Prostate gland (tissue), 2 donors: ENCODE measurements at regions of chr11 and their contacts with region 1.

Region 1: DNA sequence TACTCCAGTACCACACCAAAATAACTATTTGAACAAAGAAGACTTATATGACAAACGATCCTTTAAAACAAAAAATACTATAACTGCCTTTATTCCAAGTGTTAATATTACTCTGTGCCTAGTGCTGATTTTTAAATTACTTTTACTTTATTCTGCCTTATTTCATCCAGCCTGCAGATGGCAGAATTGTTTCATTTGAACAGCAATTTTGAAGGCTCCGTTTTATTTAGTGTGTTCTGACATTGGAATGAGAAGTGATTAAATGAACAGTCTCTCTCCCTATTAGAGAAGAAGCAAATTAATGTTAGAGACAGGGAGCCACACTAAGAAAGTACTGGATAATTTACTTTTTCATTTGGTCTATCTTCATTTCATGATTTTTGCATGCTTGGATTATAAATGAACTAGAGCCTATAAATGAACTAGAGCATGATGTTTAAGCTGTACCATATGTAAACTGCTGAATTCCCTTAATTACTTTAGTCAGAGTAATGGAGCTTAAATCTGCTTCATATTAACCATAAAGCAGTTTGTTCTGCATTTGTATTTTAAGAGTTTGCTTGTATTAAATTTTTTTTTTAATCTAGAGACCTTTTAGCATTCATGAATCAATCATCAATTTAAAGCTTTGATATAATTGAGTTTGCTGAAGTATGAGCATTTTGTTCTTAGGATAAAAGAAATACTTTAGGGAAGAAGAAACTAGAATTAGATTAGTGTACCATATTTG is 9.8 kb downstream of the PDHX start:
- DNase-seq: no peak
- H3K4me3 ChIP-seq: no peak overlapping the region
- H3K27ac ChIP-seq: no peak overlapping the region
- H3K4me1 ChIP-seq: no peaks in the 10 kb centered on the region
- H3K27me3 ChIP-seq: no peaks in the 10 kb centered on the region
- CTCF ChIP-seq: peak in 3 of 4 experiments; percentile 80 to 92 (median 84)
- POLR2A ChIP-seq: no peak

Region 2: GRCh38 chr11:35138943-35139721 is 212.9 kb after region 1 on chr11 and contains the start of gene CD44:
- intact Hi-C with region 1: loop called (anchors 10 kb)
- DNase-seq: peak; percentile 79
- H3K4me3 ChIP-seq: peak within 1 kb of the TSS; percentile 62 to 65
- H3K27ac ChIP-seq: peak within 1 kb of the TSS; percentile 80 to 85
- H3K4me1 ChIP-seq: no peaks in the 10 kb centered on the region
- H3K27me3 ChIP-seq: no peaks in the 10 kb centered on the region
- CTCF ChIP-seq: no peak
- POLR2A ChIP-seq: peak; percentile 78
- total RNA-seq, gene CD44: 166 to 203 TPM

Region 3: DNA sequence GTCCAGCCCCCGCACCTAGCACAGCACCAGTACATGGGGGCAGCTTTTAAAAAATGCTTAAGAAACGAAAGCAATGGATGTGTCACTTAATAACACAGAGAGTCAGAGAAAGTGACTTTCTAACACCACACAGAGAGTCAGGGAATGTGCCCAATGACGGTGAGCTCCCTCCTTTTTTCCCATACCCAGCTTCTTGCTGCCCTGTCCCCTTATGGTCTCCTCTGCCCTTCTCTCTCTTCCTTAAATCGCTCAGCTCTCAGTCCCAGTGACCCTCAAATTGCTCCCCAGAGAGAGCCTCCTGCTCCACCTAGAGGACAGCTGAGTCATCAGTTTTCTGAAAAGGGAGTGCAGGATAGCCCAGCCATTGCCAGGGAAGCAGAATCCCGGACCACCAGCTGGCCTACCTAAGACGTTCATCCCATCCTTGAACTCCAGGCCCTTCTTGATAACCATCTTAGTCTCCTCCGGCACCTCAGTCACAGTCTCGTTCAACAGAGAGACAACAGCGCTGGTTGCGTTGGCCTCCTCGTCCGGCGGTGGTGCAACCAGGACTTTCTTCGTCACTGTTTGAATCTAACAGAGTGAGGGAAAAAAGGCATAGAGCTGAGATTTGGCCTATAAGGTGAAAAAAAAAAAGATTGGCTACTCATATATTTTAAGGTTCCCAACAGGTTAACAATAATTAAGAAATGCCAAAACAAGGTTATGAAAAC is 379.6 kb after region 1 on chr11:
- intact Hi-C with region 1: loop called (anchors 2 kb)
- DNase-seq: peak; percentile 16
- H3K4me3 ChIP-seq: no peak overlapping the region
- H3K27ac ChIP-seq: peak overlapping the region in 1 of 2 donors; percentile 42
- H3K4me1 ChIP-seq: no peaks in the 10 kb centered on the region
- H3K27me3 ChIP-seq: no peaks in the 10 kb centered on the region
- CTCF ChIP-seq: peak in 3 of 4 experiments; percentile 17 to 53 (median 44)
- POLR2A ChIP-seq: no peak

Region 4: DNA sequence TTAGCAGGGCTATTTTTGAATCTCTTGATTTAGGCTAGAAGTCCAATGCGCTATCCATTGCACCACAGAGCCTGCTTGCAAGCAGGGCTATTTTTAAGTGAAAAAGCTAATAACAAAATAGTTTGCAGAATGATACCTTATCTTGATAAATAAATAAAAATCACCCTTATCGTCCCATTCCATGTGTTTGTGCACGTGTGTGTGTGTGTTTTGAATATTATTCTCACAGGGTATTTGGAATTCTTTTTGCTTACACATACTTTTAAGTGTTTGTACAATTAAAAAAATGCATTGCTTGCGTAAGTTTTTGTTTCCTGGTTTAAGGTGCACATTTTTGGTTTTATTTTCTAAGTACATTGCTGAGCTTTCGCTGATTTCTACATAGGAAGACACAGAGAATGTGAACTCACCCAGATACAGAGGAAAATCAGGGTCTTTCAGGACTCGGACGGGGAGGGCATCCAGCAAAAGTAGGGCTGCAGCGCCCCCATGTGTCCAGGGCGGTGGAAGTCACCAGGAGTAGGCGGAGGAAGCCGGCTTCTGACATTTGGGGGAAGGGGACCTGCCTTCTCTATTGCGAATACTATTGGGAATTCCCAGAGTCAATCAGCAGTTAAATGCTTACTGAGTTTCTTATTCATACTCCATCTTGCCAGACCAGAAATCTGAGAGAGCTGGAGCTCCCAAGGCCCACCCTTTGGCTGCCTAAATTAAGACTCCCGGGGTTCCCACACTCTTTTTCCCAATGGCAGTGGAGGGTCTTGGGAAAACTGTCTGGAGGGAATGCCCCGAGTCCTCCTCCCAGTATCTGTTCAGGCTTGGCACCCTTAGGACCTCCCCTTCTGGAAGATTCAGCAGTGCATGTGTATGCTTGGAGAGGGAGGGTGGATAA is 465.9 kb after region 1 on chr11:
- intact Hi-C with region 1: loop called (anchors 2 kb)
- DNase-seq: peak; percentile 68
- H3K4me3 ChIP-seq: no peak overlapping the region
- H3K27ac ChIP-seq: peak overlapping the region; percentile 54 to 84
- H3K4me1 ChIP-seq: no peaks in the 10 kb centered on the region
- H3K27me3 ChIP-seq: no peaks in the 10 kb centered on the region
- CTCF ChIP-seq: peak; percentile 59 to 89 (median 89)
- POLR2A ChIP-seq: no peak

Region 5: DNA sequence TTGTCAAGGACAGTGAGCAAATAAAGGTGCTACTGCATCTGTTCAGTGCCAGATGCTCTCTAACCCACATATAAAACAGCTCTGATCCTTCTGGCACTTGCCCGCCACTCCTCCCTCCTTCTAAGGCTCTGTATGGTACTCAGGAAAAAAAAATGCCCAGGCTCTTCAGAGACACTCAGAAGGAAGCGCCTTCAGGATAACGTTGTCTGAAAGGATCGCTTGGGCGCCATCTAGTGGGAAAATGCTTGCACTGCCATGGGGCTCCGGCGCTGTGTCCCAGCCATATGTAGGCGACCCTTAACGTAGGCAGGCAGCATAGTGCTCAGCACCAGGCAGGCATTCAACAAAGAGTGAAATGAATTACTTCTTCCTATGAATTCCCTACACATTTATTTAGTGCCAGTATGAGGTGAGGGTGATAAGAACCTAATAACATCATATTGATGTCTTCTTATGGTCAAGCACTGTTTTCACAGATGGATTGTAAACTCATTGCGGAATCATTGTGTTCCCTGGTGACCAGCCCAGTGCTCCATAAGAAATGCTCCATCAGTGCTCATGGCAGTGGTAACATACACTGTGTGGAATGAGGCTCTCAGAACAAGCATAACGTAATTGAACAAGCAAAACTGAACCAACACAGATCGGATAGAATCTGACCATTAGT is 559.5 kb after region 1 on chr11:
- intact Hi-C with region 1: loop called (anchors 10 kb)
- DNase-seq: peak; percentile 69
- H3K4me3 ChIP-seq: no peak overlapping the region
- H3K27ac ChIP-seq: no peak overlapping the region
- H3K4me1 ChIP-seq: no peaks in the 10 kb centered on the region
- H3K27me3 ChIP-seq: no peaks in the 10 kb centered on the region
- CTCF ChIP-seq: peak; percentile 78 to 82 (median 80)
- POLR2A ChIP-seq: no peak